Astrocyte of the cerebellum (primary cell): ENCODE measurements at regions of chr11 and their contacts with region 1.

Region 1: DNA sequence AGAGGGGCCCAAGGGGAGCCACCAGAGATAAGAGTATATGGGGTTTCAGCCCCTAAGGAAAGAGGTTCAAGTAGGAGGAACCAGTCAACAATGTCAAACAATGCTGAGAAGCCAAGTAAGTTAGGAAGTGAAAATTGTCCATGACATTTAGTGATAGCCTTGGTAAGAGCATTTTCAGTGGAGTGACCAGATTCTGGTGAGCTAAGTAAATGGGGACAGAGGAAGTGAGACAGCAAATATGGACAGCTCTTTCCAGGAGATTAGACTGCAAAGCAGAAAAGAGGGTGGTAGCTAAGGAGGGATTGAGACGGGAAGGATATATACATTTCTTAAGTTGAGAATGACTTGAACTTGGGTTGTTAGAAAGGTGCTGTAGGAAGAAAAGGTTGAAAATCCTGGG is 22.9 kb downstream of the POLD3 start:
- DNase-seq: no peak
- H3K4me3 ChIP-seq: no peak overlapping the region
- CTCF ChIP-seq: no peak

Region 2: DNA sequence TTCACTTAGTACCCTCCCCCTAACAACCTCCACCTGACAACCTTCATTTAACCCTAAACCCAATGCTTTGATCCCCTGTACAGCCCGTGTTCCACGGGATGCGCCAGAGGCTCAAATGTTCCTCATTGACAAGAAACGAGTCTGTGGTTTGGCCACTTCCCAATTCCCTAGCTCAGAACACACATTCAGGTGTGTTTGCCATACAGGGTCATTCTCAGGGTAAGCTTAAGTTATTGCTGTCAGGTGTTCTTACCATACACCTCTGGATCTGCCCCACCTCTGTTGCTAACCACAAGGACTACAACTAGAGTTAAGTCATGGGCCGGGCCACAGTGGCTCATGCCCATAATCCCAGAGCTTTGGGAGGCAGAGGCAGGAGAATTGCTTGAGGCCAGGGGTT is 68.6 kb before region 1 on chr11:
- in situ Hi-C with region 1: no loop called
- DNase-seq: no peak
- H3K4me3 ChIP-seq: no peak overlapping the region
- CTCF ChIP-seq: no peak

Region 3: DNA sequence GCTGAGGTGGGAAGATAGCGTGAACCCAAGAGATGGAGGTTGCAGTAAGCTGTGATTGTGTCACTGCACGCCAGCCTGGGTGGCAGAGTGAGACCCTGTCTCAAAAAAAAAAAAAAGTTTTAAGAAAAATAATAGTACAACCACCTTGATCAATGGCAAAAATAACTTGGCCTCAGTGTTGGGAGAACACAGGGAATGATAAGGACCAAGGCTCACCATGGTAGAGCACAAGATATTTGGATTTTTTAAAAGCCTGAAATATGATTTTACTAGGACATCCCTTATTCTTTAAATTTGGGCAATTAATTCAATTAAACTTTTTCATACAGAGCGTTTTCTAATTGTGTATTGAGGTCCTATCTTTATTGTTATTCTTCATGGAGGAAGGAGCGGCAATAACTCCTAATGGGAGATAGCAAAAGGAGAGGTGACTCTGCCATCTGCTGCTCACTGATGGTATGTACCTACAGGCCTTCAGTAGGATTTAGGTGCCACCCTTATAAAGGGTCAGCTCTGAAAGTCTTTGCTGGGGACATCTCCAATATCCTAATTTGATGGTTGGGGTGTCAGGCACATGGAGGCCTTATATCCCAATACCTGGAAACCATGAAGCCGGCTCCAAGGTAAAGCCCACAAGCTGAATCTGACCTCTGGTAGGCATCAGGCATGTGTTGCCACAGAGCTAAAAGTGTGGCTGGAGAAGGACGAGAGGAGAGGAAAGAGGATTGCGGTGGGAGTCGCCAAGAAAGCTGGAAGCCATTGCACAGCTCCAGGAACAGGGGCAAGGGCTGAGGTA is 44.8 kb before region 1 on chr11:
- in situ Hi-C with region 1: no loop called
- DNase-seq: peak; percentile 29
- H3K4me3 ChIP-seq: no peak overlapping the region
- CTCF ChIP-seq: peak; percentile 71

Region 4: GRCh38 chr11:74726547-74727182 is 111.4 kb after region 1 on chr11:
- in situ Hi-C with region 1: loop called (anchors 5 kb)
- DNase-seq: peak; percentile 39
- H3K4me3 ChIP-seq: no peak overlapping the region
- CTCF ChIP-seq: peak; percentile 96